ENCODE measurements at regions of chr7 and their contacts with region 1.

Region 1: DNA sequence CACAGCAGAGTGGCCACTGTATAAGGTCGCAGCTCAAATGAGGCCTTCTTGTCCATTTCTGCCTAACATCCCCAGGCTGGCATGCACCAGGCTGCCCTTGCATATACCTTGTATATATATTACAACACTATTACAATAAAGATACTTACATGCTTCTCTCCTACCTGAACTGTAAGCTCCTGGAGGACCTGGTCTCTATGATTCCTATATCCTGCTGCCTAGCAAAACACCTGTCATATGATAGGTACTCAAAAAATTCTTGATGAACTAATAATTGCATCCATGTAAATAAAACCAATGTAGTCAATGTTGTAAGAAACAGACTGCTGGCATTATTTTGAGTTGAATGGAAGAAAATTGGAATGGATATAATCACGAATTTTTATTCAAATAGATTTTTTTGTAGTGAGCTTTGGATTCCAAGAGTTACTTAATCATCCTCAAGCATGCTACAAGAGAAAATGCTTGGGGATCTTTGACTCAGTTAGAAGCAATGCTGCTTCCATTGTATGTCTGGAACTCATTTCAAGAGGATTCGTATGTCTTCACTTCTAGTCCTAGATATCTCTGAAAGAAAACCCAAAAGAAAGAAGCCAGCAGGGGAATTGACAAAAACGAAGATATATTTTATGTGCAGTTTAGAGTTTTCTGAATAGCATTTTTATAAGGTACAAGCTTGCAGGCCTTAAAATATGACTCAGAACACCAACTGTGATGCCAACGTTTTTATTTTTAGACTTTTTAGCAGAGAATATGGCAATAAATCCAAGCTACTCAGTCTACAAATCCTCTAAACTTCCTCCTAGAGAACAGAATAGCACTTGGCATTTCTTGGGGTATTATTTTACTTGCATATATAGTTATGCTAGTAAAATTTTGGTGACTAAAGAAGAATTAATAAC is 53.1 kb downstream of the OSBPL3 start:
- DNase-seq: no peak
- ATAC-seq: no peak
- H3K4me3 ChIP-seq: no peak overlapping the region
- H3K27ac ChIP-seq: no peak overlapping the region
- H3K4me1 ChIP-seq: peaks cover 0 to 28% (median 13%) of the 10 kb centered on the region in 12 donors
- H3K27me3 ChIP-seq: no peaks in the 10 kb centered on the region
- CTCF ChIP-seq: no peak
- POLR2A ChIP-seq: no peak

Region 2: GRCh38 chr7:24874806-24875205 is 52.1 kb before region 1 on chr7:
- intact Hi-C with region 1: loop called in 1 of 10 experiments (anchors 2 kb)
- DNase-seq: no peak
- ATAC-seq: no peak
- H3K4me3 ChIP-seq: no peak overlapping the region
- H3K27ac ChIP-seq: no peak overlapping the region
- H3K4me1 ChIP-seq: peaks cover 0 to 11% (median 0%) of the 10 kb centered on the region in 12 donors
- H3K27me3 ChIP-seq: no peaks in the 10 kb centered on the region
- CTCF ChIP-seq: no peak
- POLR2A ChIP-seq: no peak

Region 3: GRCh38 chr7:25083201-25083600 is 156.3 kb after region 1 on chr7:
- intact Hi-C with region 1: no loop called
- DNase-seq: no peak
- ATAC-seq: no peak
- H3K4me3 ChIP-seq: no peak overlapping the region
- H3K27ac ChIP-seq: no peak overlapping the region
- H3K4me1 ChIP-seq: no peaks in the 10 kb centered on the region
- H3K27me3 ChIP-seq: no peaks in the 10 kb centered on the region
- CTCF ChIP-seq: no peak
- POLR2A ChIP-seq: no peak